HepG2 (cell line): ENCODE measurements at regions of chr3 and their contacts with region 1.

Region 1: GRCh38 chr3:195106418-195106906 is 164.5 kb downstream of the XXYLT1 start:
- DNase-seq: no peak
- ATAC-seq: peak; percentile 80
- H3K4me3 ChIP-seq: peak overlapping the region in 1 of 3 experiments; percentile 19; a peak in 1 of 6 replicates
- H3K27ac ChIP-seq: no peak overlapping the region
- H3K4me1 ChIP-seq: peaks cover 49% of the 10 kb centered on the region
- H3K27me3 ChIP-seq: no peaks in the 10 kb centered on the region
- CTCF ChIP-seq: peak; percentile 98
- EP300 ChIP-seq: no peak
- POLR2A ChIP-seq: no peak
- RAD21 ChIP-seq: peak; percentile 95

Region 2: DNA sequence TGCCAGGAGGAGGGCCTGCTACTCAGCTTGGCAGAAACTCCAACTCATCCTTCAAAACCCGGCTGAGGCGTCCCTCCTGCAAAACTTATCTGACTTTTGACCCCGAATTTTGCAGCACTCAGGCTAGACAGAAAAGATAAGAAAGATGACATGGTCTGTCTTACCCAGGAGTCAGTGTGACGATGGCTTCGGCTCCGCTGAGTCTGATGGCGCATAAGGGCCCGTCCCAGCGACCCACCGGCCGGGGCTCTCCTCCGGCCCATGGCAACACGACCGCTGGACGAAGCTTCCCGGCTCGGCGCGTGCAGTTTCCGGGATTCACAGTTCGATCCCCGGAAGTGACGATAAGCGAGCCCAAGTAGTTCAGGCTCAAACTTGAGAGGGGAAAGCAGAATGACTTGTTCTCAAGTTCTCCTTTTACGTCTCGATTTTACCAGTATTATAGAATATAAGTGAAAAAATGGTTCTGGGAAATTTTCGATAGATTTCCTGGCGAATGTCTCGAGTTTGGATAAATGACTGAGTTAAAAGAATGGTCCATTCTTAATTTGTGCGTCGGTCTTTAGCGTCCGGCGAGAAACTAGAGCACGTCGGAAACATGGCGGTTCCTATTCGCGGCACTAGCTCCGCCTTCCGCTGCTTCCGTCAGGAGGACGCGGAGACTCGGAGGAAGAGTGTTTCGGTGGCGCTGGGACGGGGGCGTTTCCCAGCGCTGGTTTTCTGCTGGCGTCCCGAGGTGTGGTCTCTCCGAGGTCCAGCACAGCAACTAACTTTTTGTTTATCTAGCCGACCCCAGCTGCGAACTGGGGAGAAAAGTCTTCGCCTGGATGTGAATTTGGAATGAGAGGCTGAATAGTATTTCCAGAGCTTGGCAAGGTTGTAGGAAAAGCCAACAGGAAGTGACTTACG is 434.3 kb before region 1 on chr3 and contains the start of gene LSG1:
- CTCF ChIA-PET with region 1: interaction called, 3 read pairs
- POLR2A ChIA-PET with region 1: no interaction called
- in situ Hi-C with region 1: no loop called
- intact Hi-C with region 1: loop called (anchors 1 kb)
- DNase-seq: peak; percentile 90
- ATAC-seq: peak; percentile 93
- H3K4me3 ChIP-seq: peak within 1 kb of the TSS; percentile 79 to 85 (median 84)
- H3K27ac ChIP-seq: peak within 1 kb of the TSS; percentile 81
- H3K4me1 ChIP-seq: peaks cover 43% of the 10 kb centered on the region
- H3K27me3 ChIP-seq: peaks cover 0 to 3% of the 10 kb centered on the region in 2 experiments; a peak in 1 of 5 replicates
- CTCF ChIP-seq: peak; percentile 35; the same call in 1 of the 2 replicates
- EP300 ChIP-seq: no peak; a peak in 1 of 4 replicates
- POLR2A ChIP-seq: peak; percentile 68 to 72
- RAD21 ChIP-seq: no peak
- total RNA-seq, gene LSG1: 19.3 and 32.1 TPM in 2 replicates

Region 3: DNA sequence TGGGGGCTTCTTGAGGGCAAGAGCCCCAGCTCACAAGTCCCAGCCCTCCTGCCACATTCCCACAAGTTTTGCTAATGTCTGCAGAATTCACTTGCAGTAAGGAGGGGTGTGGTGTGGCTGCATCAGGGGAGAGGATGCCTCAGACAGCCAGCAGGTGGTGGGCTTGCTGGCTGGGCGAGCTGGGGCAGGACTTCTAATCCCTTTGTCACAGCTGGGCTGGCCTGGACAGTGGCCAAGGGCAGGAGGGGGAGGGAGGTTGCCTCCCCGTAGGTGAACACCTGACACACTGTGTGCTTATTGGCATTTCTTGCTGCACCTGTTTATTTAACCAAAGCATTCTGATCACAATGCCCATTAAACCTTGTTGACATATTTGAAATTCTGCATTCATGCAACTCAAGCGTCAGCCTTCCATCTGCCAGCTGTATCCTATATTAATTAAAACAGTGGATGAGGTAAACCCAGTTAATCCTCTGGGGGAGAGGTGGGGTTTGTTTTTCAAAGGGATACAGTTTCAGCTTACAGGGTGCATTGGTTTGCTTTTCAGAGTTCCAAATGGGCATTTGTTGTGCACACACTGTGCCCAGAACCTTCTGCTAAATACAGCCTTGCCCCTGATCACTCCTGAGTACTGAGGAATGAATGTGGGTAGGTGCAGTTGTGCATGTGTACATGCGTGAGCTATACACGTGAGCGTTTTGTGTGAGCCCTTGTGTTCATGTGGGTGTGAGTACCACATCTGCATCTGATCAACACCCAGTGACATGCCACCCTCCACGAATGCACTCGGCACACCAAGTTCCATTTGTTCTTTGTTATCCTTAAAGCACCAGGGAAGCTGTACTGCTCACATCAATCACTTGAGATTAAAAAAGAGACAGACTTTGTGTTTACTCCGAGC is 104.3 kb before region 1 on chr3:
- CTCF ChIA-PET with region 1: interaction called, 15 read pairs
- POLR2A ChIA-PET with region 1: no interaction called
- in situ Hi-C with region 1: loop called (anchors 5 kb)
- intact Hi-C with region 1: loop called (anchors 1 kb)
- DNase-seq: peak; percentile 65
- ATAC-seq: peak; percentile 96
- H3K4me3 ChIP-seq: no peak overlapping the region
- H3K27ac ChIP-seq: no peak overlapping the region
- H3K4me1 ChIP-seq: peaks cover 20% of the 10 kb centered on the region
- H3K27me3 ChIP-seq: peaks cover 0 to 53% of the 10 kb centered on the region in 2 experiments; a peak in 3 of 5 replicates
- CTCF ChIP-seq: peak; percentile 92
- EP300 ChIP-seq: no peak
- POLR2A ChIP-seq: no peak
- RAD21 ChIP-seq: peak; percentile 86

Region 4: DNA sequence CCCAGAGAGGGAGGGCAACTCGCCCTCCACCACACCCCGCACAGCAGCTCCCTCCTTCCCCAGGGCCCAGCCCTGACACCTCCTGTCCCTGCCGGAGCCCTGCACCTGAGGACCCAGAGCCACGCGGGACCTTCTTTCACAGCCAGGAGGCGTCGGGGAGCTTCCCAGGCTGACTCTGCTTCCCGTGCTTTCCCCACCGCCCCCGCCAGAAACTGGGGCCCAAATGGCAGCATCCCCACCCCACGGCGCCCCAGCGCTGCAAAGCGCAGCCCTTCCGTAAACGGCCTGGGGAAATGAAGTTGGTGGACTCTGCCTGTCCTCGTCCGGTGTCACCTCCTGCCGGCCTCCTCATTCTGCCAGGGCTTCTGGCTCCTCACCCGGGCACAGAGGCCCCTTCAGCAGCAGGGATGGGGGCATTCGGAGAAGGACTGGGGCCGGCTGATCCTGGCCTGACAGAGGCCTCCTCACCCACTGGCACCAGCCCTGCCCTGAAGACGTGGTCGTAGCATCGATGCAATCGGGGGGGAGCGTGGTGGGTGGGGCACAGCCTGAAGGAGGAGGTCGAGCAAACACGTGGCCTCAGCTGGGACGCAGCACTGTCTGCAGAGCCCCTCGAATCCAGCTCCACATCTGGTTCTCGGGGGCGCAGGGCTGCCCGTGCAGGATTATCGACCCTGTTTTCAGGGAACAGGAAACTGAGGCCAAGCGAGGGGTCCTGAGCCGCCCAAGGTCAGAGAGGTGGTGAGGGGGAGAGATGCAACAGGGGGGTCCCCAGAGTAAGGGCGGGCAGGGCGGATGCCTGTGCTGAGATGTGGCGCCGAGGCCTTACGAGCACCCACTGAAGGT is 70.9 kb before region 1 on chr3:
- CTCF ChIA-PET with region 1: interaction called, 3 read pairs
- POLR2A ChIA-PET with region 1: no interaction called
- in situ Hi-C with region 1: loop called (anchors 5 kb)
- intact Hi-C with region 1: loop called (anchors 10 kb)
- DNase-seq: no peak
- ATAC-seq: no peak
- H3K4me3 ChIP-seq: no peak overlapping the region
- H3K27ac ChIP-seq: no peak overlapping the region
- H3K4me1 ChIP-seq: peaks cover 55% of the 10 kb centered on the region
- H3K27me3 ChIP-seq: peaks cover 0 to 50% of the 10 kb centered on the region in 2 experiments; a peak in 4 of 5 replicates
- CTCF ChIP-seq: peak; percentile 38
- EP300 ChIP-seq: no peak
- POLR2A ChIP-seq: no peak
- RAD21 ChIP-seq: 0 out of 2 replicates have a peak, but pooled peaks have one; percentile 22

Region 5: GRCh38 chr3:195133462-195133861 is 27.0 kb after region 1 on chr3:
- CTCF ChIA-PET with region 1: no interaction called
- POLR2A ChIA-PET with region 1: no interaction called
- in situ Hi-C with region 1: no loop called
- intact Hi-C with region 1: no loop called
- DNase-seq: no peak
- ATAC-seq: no peak
- H3K4me3 ChIP-seq: no peak overlapping the region
- H3K27ac ChIP-seq: no peak overlapping the region
- H3K4me1 ChIP-seq: no peaks in the 10 kb centered on the region
- H3K27me3 ChIP-seq: no peaks in the 10 kb centered on the region
- CTCF ChIP-seq: no peak
- EP300 ChIP-seq: no peak
- POLR2A ChIP-seq: no peak
- RAD21 ChIP-seq: no peak